GM10248 (cell line): ENCODE measurements at regions of chr18 and their contacts with region 1.

Region 1: DNA sequence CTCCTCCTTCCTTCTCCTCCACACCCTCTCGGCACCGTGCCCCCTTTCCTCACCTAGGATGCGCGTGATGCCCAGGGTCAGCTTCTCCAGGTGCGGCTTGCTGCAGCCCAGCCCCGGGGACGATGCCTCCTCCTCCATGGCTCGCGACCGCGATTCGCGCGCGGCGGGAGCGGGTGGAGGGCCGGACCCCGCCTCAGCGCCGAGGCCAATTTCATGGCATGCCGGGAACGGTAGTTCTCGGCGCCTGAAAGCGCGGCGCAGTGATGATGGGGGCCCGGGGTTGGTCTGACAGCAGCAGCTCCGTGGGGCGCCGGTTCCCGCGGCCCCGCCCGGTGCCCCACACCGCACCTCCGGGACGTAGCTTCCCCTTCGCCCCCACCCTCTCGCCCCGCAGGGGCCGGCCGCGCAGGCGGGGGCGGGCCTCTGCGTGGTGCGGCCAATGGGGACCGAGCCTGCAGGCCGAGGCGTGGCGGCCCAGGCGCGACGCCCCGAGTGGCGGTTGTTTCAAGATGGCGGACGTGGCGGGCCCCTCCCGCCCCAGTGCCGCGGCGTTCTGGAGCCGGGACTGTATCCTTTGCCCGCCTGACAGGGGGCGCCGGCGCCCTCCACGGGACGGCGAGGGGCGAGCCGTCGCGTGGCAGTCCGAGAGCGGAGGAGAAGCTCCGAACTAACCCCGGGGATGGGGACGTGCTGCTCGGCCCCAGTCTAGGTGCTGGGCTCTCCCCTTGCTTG is at the starts of genes KIAA1328 and TPGS2:
- DNase-seq: peak; percentile 93
- CTCF ChIP-seq: peak; percentile 41

Region 2: GRCh38 chr18:36839835-36840234 is 11.0 kb after region 1 on chr18:
- CTCF ChIA-PET with region 1: interaction called, 14 read pairs
- POLR2A ChIA-PET with region 1: interaction called, 3 read pairs
- DNase-seq: no peak
- CTCF ChIP-seq: no peak